GM12878 (cell line): ENCODE measurements at regions of chrX and their contacts with region 1.

Region 1: DNA sequence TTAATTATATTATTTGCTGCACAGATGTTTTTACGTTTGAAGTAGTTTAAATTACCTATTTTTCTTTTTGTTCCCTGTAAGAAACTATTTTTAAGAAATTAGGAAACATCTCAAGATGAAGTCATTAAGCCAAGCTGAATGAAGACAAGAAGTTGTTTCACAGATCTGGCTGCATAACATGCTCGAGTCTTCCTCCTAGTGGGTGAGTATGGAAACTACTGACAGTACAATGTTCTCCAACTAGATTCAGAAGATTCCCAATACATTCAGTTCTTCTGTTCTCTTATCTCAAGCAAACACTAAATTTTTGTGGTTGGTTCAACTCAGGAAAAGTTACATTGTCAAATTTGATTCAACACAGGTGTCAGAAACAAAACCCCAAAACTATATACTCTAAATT is 256.8 kb upstream of the VCX start:
- DNase-seq: no peak
- ATAC-seq: peak; percentile 67; the same call in 2 of the 3 replicates
- H3K4me3 ChIP-seq: no peak overlapping the region
- H3K27ac ChIP-seq: no peak overlapping the region
- H3K4me1 ChIP-seq: no peaks in the 10 kb centered on the region
- H3K27me3 ChIP-seq: no peaks in the 10 kb centered on the region
- CTCF ChIP-seq: peak; percentile 53 to 67 (median 55); a peak in 5 of 6 replicates
- EP300 ChIP-seq: no peak
- POLR2A ChIP-seq: no peak
- RAD21 ChIP-seq: peak; percentile 80

Region 2: DNA sequence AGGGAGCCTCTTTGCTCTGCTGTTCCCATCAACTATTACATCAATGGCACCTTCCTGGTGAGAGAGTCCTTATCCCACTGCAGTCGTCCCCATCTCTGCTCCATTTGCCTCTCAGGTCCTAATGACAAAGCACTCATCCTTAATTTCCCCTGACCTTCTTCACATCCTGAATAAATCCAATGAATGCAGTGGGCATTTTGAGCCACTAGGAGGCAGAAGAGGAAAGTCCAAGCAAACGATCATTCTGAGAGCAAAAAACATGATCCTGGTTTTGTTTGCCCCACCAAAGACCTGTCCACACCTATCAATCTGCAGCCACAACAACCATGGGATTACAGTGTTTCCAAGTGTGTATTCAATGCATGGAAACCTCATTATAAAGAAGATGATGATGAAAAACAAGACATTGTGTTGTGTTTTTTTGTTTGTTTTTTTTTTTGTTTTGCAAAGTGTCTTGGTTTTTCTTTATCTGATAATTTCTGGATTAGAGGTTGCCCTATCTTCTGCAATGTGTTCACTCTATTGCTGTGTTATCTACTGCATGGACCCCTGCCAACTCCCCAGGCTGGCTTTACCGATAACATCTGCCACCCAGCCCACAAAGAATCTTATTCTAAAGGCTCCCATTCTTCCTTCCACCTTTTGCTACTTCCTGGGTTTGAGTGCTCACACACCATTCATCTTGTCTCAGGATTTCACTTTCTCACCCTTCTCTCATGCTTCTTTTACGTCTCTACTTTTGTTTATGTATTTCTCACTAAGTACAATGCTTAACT is 1564.6 kb before region 1 on chrX:
- CTCF ChIA-PET with region 1: no interaction called
- POLR2A ChIA-PET with region 1: no interaction called
- RAD21 ChIA-PET with region 1: no interaction called
- SMC1A ChIA-PET with region 1: no interaction called
- in situ Hi-C with region 1: no loop called
- intact Hi-C with region 1: loop called (anchors 2 kb)
- DNase-seq: no peak
- ATAC-seq: peak; percentile 69
- H3K4me3 ChIP-seq: no peak overlapping the region
- H3K27ac ChIP-seq: no peak overlapping the region
- H3K4me1 ChIP-seq: no peaks in the 10 kb centered on the region
- H3K27me3 ChIP-seq: no peaks in the 10 kb centered on the region
- CTCF ChIP-seq: peak; percentile 69 to 79 (median 79)
- EP300 ChIP-seq: no peak
- POLR2A ChIP-seq: no peak
- RAD21 ChIP-seq: peak; percentile 95

Region 3: GRCh38 chrX:7132335-7133049 is 453.6 kb before region 1 on chrX:
- CTCF ChIA-PET with region 1: no interaction called
- POLR2A ChIA-PET with region 1: no interaction called
- RAD21 ChIA-PET with region 1: interaction called, 3 read pairs
- SMC1A ChIA-PET with region 1: interaction called, 3 read pairs
- in situ Hi-C with region 1: no loop called
- intact Hi-C with region 1: loop called (anchors 1 kb)
- DNase-seq: no peak
- ATAC-seq: peak; percentile 93
- H3K4me3 ChIP-seq: no peak overlapping the region
- H3K27ac ChIP-seq: peak overlapping the region; percentile 30
- H3K4me1 ChIP-seq: peaks cover 12% of the 10 kb centered on the region
- H3K27me3 ChIP-seq: no peaks in the 10 kb centered on the region
- CTCF ChIP-seq: peak; percentile 55 to 60 (median 56)
- EP300 ChIP-seq: no peak
- POLR2A ChIP-seq: no peak
- RAD21 ChIP-seq: peak; percentile 66

Region 4: GRCh38 chrX:7191681-7192110 is 394.4 kb before region 1 on chrX:
- CTCF ChIA-PET with region 1: interaction called, 6 read pairs
- POLR2A ChIA-PET with region 1: no interaction called
- RAD21 ChIA-PET with region 1: interaction called, 6 read pairs
- SMC1A ChIA-PET with region 1: interaction called, 3 read pairs
- in situ Hi-C with region 1: no loop called
- intact Hi-C with region 1: loop called (anchors 2 kb)
- DNase-seq: no peak
- ATAC-seq: peak; percentile 81
- H3K4me3 ChIP-seq: no peak overlapping the region
- H3K27ac ChIP-seq: no peak overlapping the region
- H3K4me1 ChIP-seq: no peaks in the 10 kb centered on the region
- H3K27me3 ChIP-seq: no peaks in the 10 kb centered on the region
- CTCF ChIP-seq: peak; percentile 19 to 41 (median 29); a peak in 4 of 6 replicates
- EP300 ChIP-seq: no peak
- POLR2A ChIP-seq: no peak
- RAD21 ChIP-seq: peak; percentile 53

Region 5: GRCh38 chrX:7294483-7294882 is 291.6 kb before region 1 on chrX:
- CTCF ChIA-PET with region 1: no interaction called
- POLR2A ChIA-PET with region 1: no interaction called
- RAD21 ChIA-PET with region 1: no interaction called
- SMC1A ChIA-PET with region 1: no interaction called
- in situ Hi-C with region 1: no loop called
- intact Hi-C with region 1: no loop called
- DNase-seq: no peak
- ATAC-seq: no peak
- H3K4me3 ChIP-seq: no peak overlapping the region
- H3K27ac ChIP-seq: no peak overlapping the region
- H3K4me1 ChIP-seq: no peaks in the 10 kb centered on the region
- H3K27me3 ChIP-seq: no peaks in the 10 kb centered on the region
- CTCF ChIP-seq: no peak
- EP300 ChIP-seq: no peak
- POLR2A ChIP-seq: no peak
- RAD21 ChIP-seq: no peak